OCI-LY7 (cell line): ENCODE measurements at regions of chr11 and their contacts with region 1.

Region 1: GRCh38 chr11:63023841-63024648 is 8.4 kb upstream of the SLC22A8 start:
- DNase-seq: peak; percentile 73
- H3K4me3 ChIP-seq: no peak overlapping the region
- H3K27ac ChIP-seq: no peak overlapping the region
- H3K4me1 ChIP-seq: no peaks in the 10 kb centered on the region
- CTCF ChIP-seq: peak; percentile 100

Region 2: DNA sequence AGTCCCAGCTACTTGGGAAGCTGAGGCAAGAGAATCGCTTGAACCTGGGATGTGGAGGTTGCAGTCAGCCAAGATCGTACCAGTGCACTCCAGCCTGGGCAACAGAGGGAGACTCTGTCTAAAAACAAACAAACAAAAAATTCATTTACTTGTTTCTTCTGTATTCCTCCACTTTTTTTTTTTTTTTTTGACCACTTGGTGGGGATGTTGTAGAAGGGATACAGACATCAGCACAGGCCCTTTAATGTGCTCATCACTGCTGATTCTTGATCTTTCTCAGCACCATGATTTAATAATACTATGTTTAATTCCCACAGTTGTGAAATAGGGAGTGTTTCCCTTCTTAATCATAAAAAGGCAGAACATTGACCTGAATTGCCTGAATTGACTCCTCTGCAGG is 291.2 kb before region 1 on chr11:
- CTCF ChIA-PET with region 1: no interaction called
- POLR2A ChIA-PET with region 1: no interaction called
- intact Hi-C with region 1: loop called (anchors 10 kb)
- DNase-seq: peak; percentile 47
- H3K4me3 ChIP-seq: no peak overlapping the region
- H3K27ac ChIP-seq: no peak overlapping the region
- H3K4me1 ChIP-seq: peaks cover 12% of the 10 kb centered on the region
- CTCF ChIP-seq: peak; percentile 70

Region 3: GRCh38 chr11:62988276-62988675 is 35.8 kb before region 1 on chr11:
- CTCF ChIA-PET with region 1: no interaction called
- POLR2A ChIA-PET with region 1: no interaction called
- intact Hi-C with region 1: no loop called
- DNase-seq: no peak
- H3K4me3 ChIP-seq: no peak overlapping the region
- H3K27ac ChIP-seq: no peak overlapping the region
- H3K4me1 ChIP-seq: no peaks in the 10 kb centered on the region
- CTCF ChIP-seq: no peak

Region 4: GRCh38 chr11:63080682-63081081 is 56.6 kb after region 1 on chr11:
- CTCF ChIA-PET with region 1: no interaction called
- POLR2A ChIA-PET with region 1: no interaction called
- intact Hi-C with region 1: no loop called
- DNase-seq: no peak
- H3K4me3 ChIP-seq: no peak overlapping the region
- H3K27ac ChIP-seq: no peak overlapping the region
- H3K4me1 ChIP-seq: no peaks in the 10 kb centered on the region
- CTCF ChIP-seq: no peak